HCT116 (cell line): ENCODE measurements at regions of chr1 and their contacts with region 1.

Region 1: DNA sequence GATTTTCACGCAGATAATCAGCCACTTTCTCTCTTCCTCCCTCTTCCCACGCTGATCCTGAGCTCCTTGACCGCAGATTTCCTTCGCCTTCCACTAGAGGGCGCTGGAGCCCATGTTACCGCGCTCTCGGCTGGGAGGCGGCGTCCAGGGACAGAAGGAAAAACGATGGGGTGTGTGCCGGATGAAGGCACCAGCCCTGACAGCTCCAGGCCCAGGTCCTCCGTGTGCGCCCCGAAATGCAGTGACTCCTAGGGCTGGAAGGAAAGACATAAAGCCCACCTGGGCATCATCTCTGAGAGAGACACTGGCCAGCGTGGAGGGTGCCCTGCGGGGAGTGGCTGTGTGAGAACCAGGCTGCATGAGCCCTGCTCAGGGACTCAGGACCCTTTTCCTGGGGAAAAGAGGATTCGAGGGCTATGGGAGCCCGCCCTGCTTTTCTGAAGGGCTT is 44.9 kb upstream of the CYP2J2 start:
- DNase-seq: peak; percentile 39
- ATAC-seq: peak; percentile 99
- H3K4me3 ChIP-seq: no peak overlapping the region
- H3K27ac ChIP-seq: no peak overlapping the region
- H3K4me1 ChIP-seq: peaks cover 2 to 4% of the 10 kb centered on the region in 2 experiments; a peak in 2 of 4 replicates
- H3K27me3 ChIP-seq: peaks cover 10% of the 10 kb centered on the region; the same call in 1 of the 2 replicates
- CTCF ChIP-seq: peak; percentile 69 to 95 (median 83); a peak in 5 of 6 replicates
- POLR2A ChIP-seq: no peak
- RAD21 ChIP-seq: peak; percentile 87

Region 2: DNA sequence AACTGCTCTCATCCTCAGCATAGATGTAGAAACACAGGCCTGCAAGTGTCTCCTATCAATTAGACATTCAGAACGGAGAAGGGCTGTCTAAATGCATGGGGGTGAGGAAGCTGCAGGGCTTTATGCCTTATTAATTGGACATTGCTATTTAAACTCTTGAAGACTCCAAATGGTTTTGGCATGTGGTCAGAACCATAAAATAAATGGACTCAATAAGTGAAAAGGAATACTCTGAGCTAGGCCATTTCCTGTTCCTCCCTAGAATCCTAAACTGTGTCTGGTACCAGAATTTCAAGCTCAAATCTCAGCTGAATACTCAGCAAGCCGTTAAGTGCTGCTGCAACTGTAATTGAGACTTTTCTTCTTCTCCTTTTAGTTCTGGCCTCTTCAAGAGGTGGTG is 182.5 kb after region 1 on chr1:
- CTCF ChIA-PET with region 1: interaction called, 10 read pairs
- POLR2A ChIA-PET with region 1: no interaction called
- RAD21 ChIA-PET with region 1: no interaction called
- intact Hi-C with region 1: no loop called
- DNase-seq: no peak
- ATAC-seq: no peak
- H3K4me3 ChIP-seq: no peak overlapping the region
- H3K27ac ChIP-seq: no peak overlapping the region
- H3K4me1 ChIP-seq: no peaks in the 10 kb centered on the region
- H3K27me3 ChIP-seq: peaks cover 21% of the 10 kb centered on the region
- CTCF ChIP-seq: no peak
- POLR2A ChIP-seq: no peak
- RAD21 ChIP-seq: no peak

Region 3: GRCh38 chr1:60765204-60765603 is 793.7 kb after region 1 on chr1:
- CTCF ChIA-PET with region 1: interaction called, 13 read pairs
- POLR2A ChIA-PET with region 1: no interaction called
- RAD21 ChIA-PET with region 1: no interaction called
- intact Hi-C with region 1: loop called (anchors 1 kb)
- DNase-seq: peak; percentile 50
- ATAC-seq: peak; percentile 92
- H3K4me3 ChIP-seq: no peak overlapping the region
- H3K27ac ChIP-seq: no peak overlapping the region
- H3K4me1 ChIP-seq: no peaks in the 10 kb centered on the region
- H3K27me3 ChIP-seq: peaks cover 16% of the 10 kb centered on the region
- CTCF ChIP-seq: peak; percentile 55 to 77 (median 67); a peak in 5 of 6 replicates
- POLR2A ChIP-seq: no peak
- RAD21 ChIP-seq: peak; percentile 81

Region 4: DNA sequence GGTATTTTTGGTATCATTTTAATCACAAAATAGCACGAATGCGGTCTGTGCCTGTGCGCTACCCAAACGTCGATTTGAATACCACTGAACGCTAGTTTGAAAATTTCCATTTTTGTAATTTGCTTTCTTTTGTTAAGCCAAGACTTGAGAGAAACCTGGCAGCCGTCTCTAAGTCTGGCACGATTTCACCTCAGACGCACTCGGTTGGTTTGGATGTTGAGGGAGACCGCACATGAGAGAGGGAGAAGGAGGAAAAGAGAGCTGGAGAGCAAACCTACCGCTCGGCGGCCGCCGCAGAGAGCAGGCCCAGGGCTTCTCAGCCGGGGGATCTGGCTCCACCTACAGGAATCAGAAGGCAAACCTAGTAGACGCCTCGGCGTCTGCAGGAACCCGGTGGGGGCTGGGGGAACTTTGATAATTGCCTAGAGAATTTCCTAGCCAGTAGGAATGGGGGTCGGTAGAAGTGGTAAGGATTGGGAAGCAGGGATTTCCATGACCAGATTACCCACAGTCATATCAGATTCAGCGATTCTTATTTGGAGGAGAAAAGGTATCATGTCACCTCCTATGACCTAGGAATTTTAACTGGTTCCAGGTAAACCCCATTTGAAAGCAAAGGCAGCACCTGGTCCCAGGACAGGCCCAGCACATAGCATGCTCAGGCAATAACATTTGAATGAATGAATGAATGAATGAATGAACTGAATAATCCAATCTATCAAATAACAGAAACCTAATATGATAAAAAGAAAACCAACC is 1670.3 kb after region 1 on chr1:
- CTCF ChIA-PET with region 1: no interaction called
- POLR2A ChIA-PET with region 1: no interaction called
- RAD21 ChIA-PET with region 1: no interaction called
- intact Hi-C with region 1: loop called (anchors 10 kb)
- DNase-seq: peak; percentile 35
- ATAC-seq: peak; percentile 100
- H3K4me3 ChIP-seq: peak overlapping the region in 1 of 2 experiments; percentile 30; a peak in 3 of 4 replicates
- H3K27ac ChIP-seq: no peak overlapping the region
- H3K4me1 ChIP-seq: peaks cover 2 to 11% of the 10 kb centered on the region in 2 experiments; a peak in 3 of 4 replicates
- H3K27me3 ChIP-seq: no peaks in the 10 kb centered on the region
- CTCF ChIP-seq: peak; percentile 61 to 68 (median 64); a peak in 5 of 6 replicates
- POLR2A ChIP-seq: no peak
- RAD21 ChIP-seq: peak; percentile 70